K562 (cell line): ENCODE measurements at regions of chr22 and their contacts with region 1.

Region 1: GRCh38 chr22:21938071-21938822 is 14.4 kb downstream of the PPM1F start:
- DNase-seq: peak; percentile 100
- ATAC-seq: peak; percentile 97
- H3K4me3 ChIP-seq: peak overlapping the region; percentile 45
- H3K27ac ChIP-seq: peak overlapping the region; percentile 85
- H3K4me1 ChIP-seq: peaks cover 12 to 52% of the 10 kb centered on the region in 2 experiments
- H3K27me3 ChIP-seq: no peaks in the 10 kb centered on the region
- CTCF ChIP-seq: peak in 2 of 3 experiments; percentile 100; a peak in 4 of 6 replicates
- EP300 ChIP-seq: peak; percentile 83
- POLR2A ChIP-seq: no peak
- RAD21 ChIP-seq: no peak

Region 2: GRCh38 chr22:21666786-21667185 is 271.5 kb before region 1 on chr22:
- CTCF ChIA-PET with region 1: interaction called, 9 read pairs
- POLR2A ChIA-PET with region 1: interaction called, 10 read pairs
- in situ Hi-C with region 1: no loop called
- intact Hi-C with region 1: loop called (anchors 1 kb)
- DNase-seq: peak; percentile 73 to 80 (median 78)
- ATAC-seq: peak; percentile 29
- H3K4me3 ChIP-seq: peak overlapping the region; percentile 44
- H3K27ac ChIP-seq: peak overlapping the region; percentile 84
- H3K4me1 ChIP-seq: peaks cover 14 to 24% of the 10 kb centered on the region in 2 experiments; a peak in 4 of 5 replicates
- H3K27me3 ChIP-seq: no peaks in the 10 kb centered on the region
- CTCF ChIP-seq: no peak; a peak in 1 of 6 replicates
- EP300 ChIP-seq: no peak
- POLR2A ChIP-seq: no peak
- RAD21 ChIP-seq: no peak

Region 3: GRCh38 chr22:21726650-21727049 is 211.6 kb before region 1 on chr22:
- CTCF ChIA-PET with region 1: interaction called, 12 read pairs
- POLR2A ChIA-PET with region 1: interaction called, 7 read pairs
- in situ Hi-C with region 1: no loop called
- intact Hi-C with region 1: no loop called
- DNase-seq: peak; percentile 77 to 94 (median 86)
- ATAC-seq: peak; percentile 98
- H3K4me3 ChIP-seq: no peak overlapping the region
- H3K27ac ChIP-seq: no peak overlapping the region
- H3K4me1 ChIP-seq: peaks cover 0 to 13% of the 10 kb centered on the region in 2 experiments; a peak in 2 of 5 replicates
- H3K27me3 ChIP-seq: peaks cover 37 to 84% of the 10 kb centered on the region in 2 experiments
- CTCF ChIP-seq: peak in 2 of 3 experiments; percentile 99; a peak in 4 of 6 replicates
- EP300 ChIP-seq: no peak
- POLR2A ChIP-seq: no peak
- RAD21 ChIP-seq: peak in 1 of 2 experiments; percentile 97; a peak in 2 of 4 replicates

Region 4: GRCh38 chr22:21778705-21779363 is 159.4 kb before region 1 on chr22:
- CTCF ChIA-PET with region 1: interaction called, 8 read pairs
- POLR2A ChIA-PET with region 1: interaction called, 4 read pairs
- in situ Hi-C with region 1: no loop called
- intact Hi-C with region 1: loop called (anchors 1 kb)
- DNase-seq: peak; percentile 84 to 90 (median 88)
- ATAC-seq: peak; percentile 61
- H3K4me3 ChIP-seq: no peak overlapping the region
- H3K27ac ChIP-seq: peak overlapping the region; percentile 7; the same call in 2 of the 3 replicates
- H3K4me1 ChIP-seq: peaks cover 0 to 12% of the 10 kb centered on the region in 2 experiments; a peak in 2 of 5 replicates
- H3K27me3 ChIP-seq: no peaks in the 10 kb centered on the region
- CTCF ChIP-seq: no peak
- EP300 ChIP-seq: peak; percentile 30; the same call in 1 of the 2 replicates
- POLR2A ChIP-seq: no peak
- RAD21 ChIP-seq: no peak

Region 5: DNA sequence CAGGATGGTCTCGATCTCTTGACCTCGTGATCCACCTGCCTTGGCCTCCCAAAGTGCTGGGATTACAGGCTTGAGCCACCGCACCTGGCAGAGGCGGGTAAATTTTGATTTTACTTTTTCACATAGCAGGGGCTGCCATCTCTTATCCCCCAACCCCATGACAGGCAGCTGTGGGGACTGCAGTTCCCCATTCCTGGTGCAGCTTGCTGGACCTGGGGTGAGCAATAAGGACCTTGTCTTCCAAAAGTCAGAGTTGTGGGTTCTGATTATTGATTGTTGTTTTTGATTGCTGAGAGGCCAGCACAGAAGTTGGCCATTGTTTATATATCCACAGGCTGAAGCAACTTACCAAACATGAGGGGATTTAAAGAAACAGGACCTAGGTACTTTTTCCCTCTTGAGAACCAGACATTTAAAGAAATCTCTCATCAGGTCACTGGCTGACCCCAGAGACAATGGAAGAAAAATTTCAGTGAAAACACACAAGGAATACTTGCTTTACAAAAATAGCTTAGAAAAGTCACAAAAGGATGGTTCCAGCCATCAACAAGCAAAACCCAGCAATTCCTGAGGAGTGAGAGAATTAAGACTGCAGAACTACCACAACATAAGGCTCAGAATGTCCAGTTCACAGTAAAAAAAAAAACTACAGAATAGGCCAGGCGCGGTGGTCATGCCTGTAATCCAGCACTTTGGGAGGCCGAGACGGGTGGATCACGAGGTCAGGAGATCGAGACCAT is 48.8 kb before region 1 on chr22:
- CTCF ChIA-PET with region 1: no interaction called
- POLR2A ChIA-PET with region 1: no interaction called
- in situ Hi-C with region 1: no loop called
- intact Hi-C with region 1: no loop called
- DNase-seq: peak in 1 of 4 experiments; percentile 30
- ATAC-seq: peak; percentile 8; the same call in 2 of the 3 replicates
- H3K4me3 ChIP-seq: no peak overlapping the region
- H3K27ac ChIP-seq: no peak overlapping the region
- H3K4me1 ChIP-seq: no peaks in the 10 kb centered on the region
- H3K27me3 ChIP-seq: peaks cover 10 to 18% of the 10 kb centered on the region in 2 experiments; a peak in 3 of 5 replicates
- CTCF ChIP-seq: no peak
- EP300 ChIP-seq: no peak
- POLR2A ChIP-seq: no peak
- RAD21 ChIP-seq: no peak

Region 6: DNA sequence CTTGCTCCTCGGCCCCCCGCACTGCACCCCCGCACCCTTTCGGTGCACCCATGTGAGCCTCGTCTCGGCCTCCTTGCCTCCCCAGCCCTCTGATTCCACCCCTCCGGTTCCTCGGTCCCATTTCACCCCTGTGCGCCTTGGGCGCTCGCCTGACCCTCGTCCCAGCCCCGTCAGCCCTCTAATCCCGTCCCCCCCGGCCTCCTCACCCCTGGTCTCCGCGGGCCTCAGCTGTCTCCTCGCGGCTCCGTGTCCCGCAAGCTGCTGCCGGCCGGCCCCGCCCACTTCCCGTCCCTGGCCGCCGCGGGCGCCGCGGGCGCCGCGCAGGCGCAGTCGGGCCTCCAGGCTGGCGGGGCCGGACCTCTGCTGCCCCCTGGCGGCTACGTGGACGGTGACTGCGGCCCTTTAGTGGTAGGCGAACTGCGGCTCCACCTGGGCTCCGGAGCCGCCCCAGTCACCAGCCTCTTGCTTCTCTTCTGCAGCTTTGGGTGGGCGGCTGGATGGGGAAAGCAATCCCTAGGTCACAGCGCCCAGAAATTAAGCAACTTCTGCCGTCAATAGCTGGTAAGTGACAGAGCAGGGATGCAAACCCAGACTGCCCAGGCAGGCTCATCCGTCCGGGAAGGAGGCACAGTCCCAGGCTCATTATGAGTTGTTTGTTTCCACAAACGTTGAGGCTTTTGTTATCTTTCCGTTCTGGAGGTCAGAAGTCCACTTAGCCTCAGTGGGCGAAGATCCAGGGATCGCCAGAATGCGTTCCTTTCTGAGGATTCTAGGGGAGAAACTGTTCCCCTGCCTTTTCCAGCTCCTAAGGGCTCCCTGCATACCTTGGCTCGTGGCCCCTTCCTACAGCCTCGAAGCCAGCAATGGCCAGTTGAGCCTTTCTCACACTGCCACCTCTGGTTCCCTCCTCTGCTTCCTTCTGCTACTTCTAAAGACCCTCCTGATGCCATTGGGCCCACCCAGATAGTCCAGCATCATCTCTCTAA is 14.6 kb after region 1 on chr22 and contains the start of gene PPM1F:
- CTCF ChIA-PET with region 1: interaction called, 87 read pairs
- POLR2A ChIA-PET with region 1: interaction called, 1,041 read pairs
- in situ Hi-C with region 1: no loop called
- intact Hi-C with region 1: loop called (anchors 2 kb)
- DNase-seq: peak; percentile 100
- ATAC-seq: peak; percentile 84
- H3K4me3 ChIP-seq: peak within 1 kb of the TSS; percentile 66
- H3K27ac ChIP-seq: peak within 1 kb of the TSS; percentile 68
- H3K4me1 ChIP-seq: peaks cover 25 to 39% of the 10 kb centered on the region in 2 experiments
- H3K27me3 ChIP-seq: no peaks in the 10 kb centered on the region
- CTCF ChIP-seq: peak; percentile 99 to 100 (median 100)
- EP300 ChIP-seq: peak; percentile 72
- POLR2A ChIP-seq: no peak
- RAD21 ChIP-seq: no peak
- polyA plus RNA-seq, gene PPM1F: 2.1 to 4.5 TPM